Activated CD4-positive, alpha-beta memory T cell treated with anti-CD3 and anti-CD28 coated beads, Interleukin-2, amount 10 ng/mL, durations not matched to agents 7 days and 5 days (primary cell): ENCODE measurements at regions of chr15 and their contacts with region 1.

Region 1: GRCh38 chr15:70091726-70092463 is 5.8 kb downstream of the TLE3 start:
- DNase-seq: peak; percentile 74
- H3K4me3 Mint-ChIP-seq: peak overlapping the region; percentile 12
- H3K27ac Mint-ChIP-seq: peak overlapping the region; percentile 57
- H3K4me1 Mint-ChIP-seq: peaks cover 79% of the 10 kb centered on the region
- H3K27me3 Mint-ChIP-seq: no peaks in the 10 kb centered on the region

Region 2: GRCh38 chr15:70023064-70023768 is 68.7 kb before region 1 on chr15:
- CTCF ChIA-PET with region 1: no interaction called
- POLR2A ChIA-PET with region 1: interaction called, 37 read pairs
- DNase-seq: peak; percentile 73
- H3K4me3 Mint-ChIP-seq: peak overlapping the region; percentile 43
- H3K27ac Mint-ChIP-seq: peak overlapping the region; percentile 77
- H3K4me1 Mint-ChIP-seq: peaks cover 23% of the 10 kb centered on the region
- H3K27me3 Mint-ChIP-seq: peaks cover 29% of the 10 kb centered on the region